ENCODE measurements at regions of chr17 and their contacts with region 1.

Region 1: DNA sequence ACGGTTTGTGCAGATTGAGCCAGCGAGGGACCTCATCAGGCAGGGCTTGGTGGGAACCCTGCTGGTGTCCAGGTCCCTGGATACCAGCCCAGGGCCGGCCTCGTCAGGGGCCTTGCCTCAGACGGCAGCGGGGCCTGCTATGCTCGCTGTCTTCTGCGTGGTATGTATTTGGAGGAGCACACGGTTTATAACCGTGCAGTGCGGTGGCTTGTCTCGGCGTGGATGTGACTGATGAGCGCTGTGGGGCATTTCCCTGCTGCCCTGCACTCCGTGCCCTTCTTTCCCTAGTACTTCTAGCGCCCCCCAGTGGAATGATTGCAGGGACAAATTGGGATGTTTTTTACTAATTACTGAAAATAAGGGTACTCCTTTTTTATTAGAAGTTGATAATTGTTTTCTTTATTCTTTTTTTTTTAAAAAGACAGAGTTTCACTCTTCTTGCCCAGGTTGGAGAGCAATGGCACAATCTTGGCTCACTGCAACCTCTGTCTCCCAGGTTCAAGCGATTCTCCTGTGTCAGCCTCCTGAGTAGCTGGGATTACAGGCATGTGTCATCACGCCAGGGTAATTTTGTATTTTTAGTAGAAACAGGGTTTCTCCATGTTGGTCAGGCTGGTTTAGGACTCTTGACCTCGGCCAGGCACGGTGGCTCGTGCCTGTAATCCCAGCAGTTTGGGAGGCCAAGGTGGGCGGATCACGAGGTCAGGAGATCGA is 15.3 kb downstream of the TBCD start:
- DNase-seq: no peak
- CTCF ChIP-seq: peak; percentile 62

Region 2: DNA sequence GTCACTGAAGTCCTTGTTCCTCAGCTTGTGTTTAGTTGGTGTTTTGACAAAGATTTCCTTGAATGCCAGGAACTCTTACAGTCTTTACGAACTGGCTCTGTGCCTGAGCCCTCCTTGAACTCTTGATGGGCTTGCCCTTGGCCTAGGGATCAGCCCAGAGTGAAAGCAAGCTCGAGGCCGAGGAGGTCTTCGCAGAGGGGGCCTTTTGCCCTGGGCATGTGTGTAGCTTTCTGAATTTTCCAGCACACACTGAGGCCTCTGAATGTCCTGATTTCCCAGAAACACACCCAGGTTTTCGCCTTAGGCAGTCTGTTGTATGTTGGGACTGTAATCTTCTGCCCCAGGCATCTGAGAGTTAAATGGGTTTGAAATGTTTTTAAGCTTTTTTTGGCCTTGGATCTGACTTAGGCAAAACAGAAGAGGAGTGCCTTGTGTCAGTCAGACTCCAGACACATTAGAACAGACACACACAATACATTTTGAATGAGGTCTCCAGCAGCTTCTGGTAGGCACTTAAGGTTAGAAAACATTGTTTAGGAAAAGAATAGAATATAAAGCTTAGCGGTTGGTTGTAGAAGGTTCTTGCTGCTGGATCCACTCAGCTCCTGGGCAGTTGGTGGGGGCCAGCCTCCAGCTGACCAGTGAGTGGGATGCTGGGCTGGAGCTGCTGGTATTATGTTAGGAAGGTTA is 230.5 kb before region 1 on chr17:
- in situ Hi-C with region 1: no loop called
- DNase-seq: no peak
- CTCF ChIP-seq: no peak

Region 3: DNA sequence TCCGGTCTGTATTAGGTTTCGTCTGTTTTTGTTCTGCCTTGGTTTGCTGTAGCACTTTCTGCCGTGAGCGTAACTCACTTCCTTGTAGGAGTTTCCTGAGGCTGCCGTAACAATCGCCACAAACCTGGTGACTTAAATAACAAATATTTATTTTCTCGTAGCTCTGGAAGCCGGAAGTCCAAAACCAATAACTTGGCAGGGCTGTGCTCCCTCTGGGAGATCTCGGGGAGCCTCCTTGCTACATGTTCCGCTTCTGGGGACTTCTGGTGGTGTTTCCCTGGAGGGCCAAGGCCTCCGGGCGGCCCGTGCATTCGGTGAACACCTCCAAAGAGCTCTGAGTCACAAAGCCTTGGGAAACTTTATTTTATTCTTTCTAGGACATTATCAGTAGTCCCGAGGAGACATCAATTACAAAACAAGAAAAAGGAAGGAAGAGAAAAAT is 112.1 kb before region 1 on chr17:
- in situ Hi-C with region 1: loop called (anchors 10 kb)
- DNase-seq: no peak
- CTCF ChIP-seq: no peak

Measured in GM13977 (cell line).